ENCODE measurements at regions of chr2 and their contacts with region 1.

Region 1: DNA sequence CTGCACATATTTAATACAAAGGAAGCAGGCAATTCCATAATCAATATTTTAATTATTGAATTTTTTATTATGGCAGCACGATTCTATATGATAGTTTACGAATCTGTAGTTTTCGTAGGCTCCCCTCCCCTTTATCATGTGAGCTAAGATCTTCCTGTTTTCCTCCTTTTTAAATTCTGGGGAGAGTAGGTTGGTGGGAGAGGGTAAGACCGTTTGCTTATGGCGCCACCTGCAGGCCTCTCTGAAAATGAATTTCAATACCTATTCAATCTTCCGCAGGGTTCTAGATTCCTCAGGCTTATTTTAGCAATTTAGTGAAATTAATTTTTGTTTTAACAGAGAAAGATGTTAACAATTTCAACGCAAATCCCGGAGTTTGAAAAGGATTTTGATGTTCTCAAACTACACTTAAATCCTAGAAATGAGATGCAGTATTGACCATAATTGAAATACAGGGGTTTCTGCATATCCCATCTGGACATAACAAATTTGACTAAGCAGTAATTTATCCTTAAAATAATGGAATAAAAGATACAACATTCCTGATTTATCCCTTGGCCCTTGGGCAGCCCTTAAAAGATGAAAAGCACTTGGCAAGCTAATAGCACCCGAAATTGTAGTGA is 12.8 kb upstream of the GBX2 start:
- H3K4me3 ChIP-seq: no peak overlapping the region
- H3K27ac ChIP-seq: no peak overlapping the region
- H3K4me1 ChIP-seq: peaks cover 4% of the 10 kb centered on the region; the same call in 1 of the 2 replicates
- CTCF ChIP-seq: peak; percentile 33; the same call in 1 of the 2 replicates

Region 2: GRCh38 chr2:235766278-235766677 is 414.7 kb before region 1 on chr2:
- CTCF ChIA-PET with region 1: interaction called, 26 read pairs
- POLR2A ChIA-PET with region 1: no interaction called
- H3K4me3 ChIP-seq: no peak overlapping the region
- H3K27ac ChIP-seq: no peak overlapping the region
- H3K4me1 ChIP-seq: no peaks in the 10 kb centered on the region
- CTCF ChIP-seq: no peak; the same call in 1 of the 2 replicates

Region 3: GRCh38 chr2:235779444-235779896 is 401.5 kb before region 1 on chr2:
- CTCF ChIA-PET with region 1: interaction called, 146 read pairs
- POLR2A ChIA-PET with region 1: interaction called, 3 read pairs
- H3K4me3 ChIP-seq: no peak overlapping the region
- H3K27ac ChIP-seq: no peak overlapping the region
- H3K4me1 ChIP-seq: peaks cover 12% of the 10 kb centered on the region
- CTCF ChIP-seq: peak; percentile 55; the same call in 1 of the 2 replicates

Region 4: GRCh38 chr2:235784789-235785188 is 396.2 kb before region 1 on chr2:
- CTCF ChIA-PET with region 1: interaction called, 146 read pairs
- POLR2A ChIA-PET with region 1: interaction called, 3 read pairs
- H3K4me3 ChIP-seq: no peak overlapping the region
- H3K27ac ChIP-seq: no peak overlapping the region
- H3K4me1 ChIP-seq: peaks cover 10% of the 10 kb centered on the region
- CTCF ChIP-seq: no peak

Region 5: GRCh38 chr2:235793163-235793752 is 387.7 kb before region 1 on chr2:
- CTCF ChIA-PET with region 1: interaction called, 18 read pairs
- POLR2A ChIA-PET with region 1: no interaction called
- H3K4me3 ChIP-seq: no peak overlapping the region
- H3K27ac ChIP-seq: no peak overlapping the region
- H3K4me1 ChIP-seq: no peaks in the 10 kb centered on the region
- CTCF ChIP-seq: no peak

Region 6: GRCh38 chr2:236168110-236169067 is 12.6 kb before region 1 on chr2 and contains the start of gene GBX2:
- CTCF ChIA-PET with region 1: interaction called, 13 read pairs
- POLR2A ChIA-PET with region 1: interaction called, 5 read pairs
- H3K4me3 ChIP-seq: peak within 1 kb of the TSS; percentile 74
- H3K27ac ChIP-seq: peak within 1 kb of the TSS; percentile 60; the same call in 1 of the 2 replicates
- H3K4me1 ChIP-seq: no peaks in the 10 kb centered on the region; the same call in 1 of the 2 replicates
- CTCF ChIP-seq: no peak

Region 7: GRCh38 chr2:236193051-236193450 is 12.1 kb after region 1 on chr2:
- CTCF ChIA-PET with region 1: interaction called, 14 read pairs
- POLR2A ChIA-PET with region 1: no interaction called
- H3K4me3 ChIP-seq: no peak overlapping the region
- H3K27ac ChIP-seq: no peak overlapping the region
- H3K4me1 ChIP-seq: no peaks in the 10 kb centered on the region
- CTCF ChIP-seq: no peak